ENCODE measurements at regions of chr2 and their contacts with region 1.

Region 1: GRCh38 chr2:172234716-172235691 is 132.3 kb upstream of the DLX2 start:
- DNase-seq: no peak
- ATAC-seq: no peak
- H3K4me3 ChIP-seq: peak overlapping the region; percentile 60
- H3K27ac ChIP-seq: no peak overlapping the region
- H3K4me1 ChIP-seq: peaks cover 35% of the 10 kb centered on the region
- H3K27me3 ChIP-seq: no peaks in the 10 kb centered on the region
- CTCF ChIP-seq: no peak

Region 2: GRCh38 chr2:172179045-172179701 is 55.8 kb before region 1 on chr2:
- CTCF ChIA-PET with region 1: interaction called, 5 read pairs
- POLR2A ChIA-PET with region 1: no interaction called
- intact Hi-C with region 1: loop called (anchors 5 kb)
- DNase-seq: peak; percentile 88
- ATAC-seq: peak; percentile 94
- H3K4me3 ChIP-seq: no peak overlapping the region
- H3K27ac ChIP-seq: peak overlapping the region; percentile 12; the same call in 1 of the 2 replicates
- H3K4me1 ChIP-seq: peaks cover 26% of the 10 kb centered on the region
- H3K27me3 ChIP-seq: no peaks in the 10 kb centered on the region
- CTCF ChIP-seq: no peak

Region 3: GRCh38 chr2:172704072-172704936 is 469.3 kb after region 1 on chr2:
- CTCF ChIA-PET with region 1: no interaction called
- POLR2A ChIA-PET with region 1: no interaction called
- intact Hi-C with region 1: no loop called
- DNase-seq: peak; percentile 78
- ATAC-seq: peak; percentile 66
- H3K4me3 ChIP-seq: no peak overlapping the region
- H3K27ac ChIP-seq: no peak overlapping the region
- H3K4me1 ChIP-seq: peaks cover 25% of the 10 kb centered on the region
- H3K27me3 ChIP-seq: no peaks in the 10 kb centered on the region
- CTCF ChIP-seq: peak; percentile 71

Measured in PC-3 (cell line).